H1 (cell line): ENCODE measurements at regions of chr17 and their contacts with region 1.

Region 1: DNA sequence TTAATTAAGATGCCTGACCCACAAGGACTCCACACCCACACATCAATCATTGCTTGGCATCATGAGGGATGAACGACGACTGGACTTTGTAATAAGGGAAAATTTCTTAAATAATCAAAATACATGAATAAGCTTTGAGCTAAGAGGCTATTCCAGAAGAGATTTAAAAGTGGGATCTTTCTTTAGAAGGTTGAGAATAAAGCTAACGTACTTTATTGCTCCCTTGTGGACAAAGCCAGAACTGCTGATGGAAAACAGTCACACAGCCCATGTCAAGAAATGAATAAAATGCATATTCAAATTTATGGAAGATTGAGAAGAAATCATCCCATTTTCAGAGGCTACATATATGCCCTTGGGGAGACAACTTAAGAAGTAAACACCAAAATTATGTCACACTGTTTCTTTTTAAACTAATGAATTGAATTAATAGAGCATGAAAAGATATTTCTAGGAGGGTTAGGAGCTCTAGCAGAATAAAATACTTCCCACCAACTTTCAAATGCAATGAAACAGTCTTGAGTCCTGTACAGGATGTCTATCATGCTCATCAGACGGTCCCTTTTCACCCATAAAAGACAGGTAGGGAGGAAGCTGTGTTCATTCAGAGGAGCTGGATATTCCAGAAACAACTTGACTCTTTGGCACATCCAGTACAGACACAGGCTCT is 60.2 kb upstream of the PHOSPHO1 start:
- DNase-seq: no peak
- H3K4me3 ChIP-seq: no peak overlapping the region
- H3K27ac ChIP-seq: no peak overlapping the region
- H3K4me1 ChIP-seq: no peaks in the 10 kb centered on the region
- H3K27me3 ChIP-seq: no peaks in the 10 kb centered on the region
- CTCF ChIP-seq: peak in 2 of 3 experiments; percentile 46 to 62; a peak in 2 of 4 replicates
- EP300 ChIP-seq: no peak
- POLR2A ChIP-seq: no peak
- RAD21 ChIP-seq: peak; percentile 62 to 66

Region 2: GRCh38 chr17:49223517-49224197 is 67.2 kb before region 1 on chr17:
- CTCF ChIA-PET with region 1: interaction called, 38 read pairs
- POLR2A ChIA-PET with region 1: no interaction called
- DNase-seq: peak in 1 of 2 experiments; percentile 97
- H3K4me3 ChIP-seq: peak overlapping the region; percentile 34 to 63 (median 55)
- H3K27ac ChIP-seq: no peak overlapping the region
- H3K4me1 ChIP-seq: peaks cover 0 to 8% (median 6%) of the 10 kb centered on the region in 4 experiments; a peak in 4 of 7 replicates
- H3K27me3 ChIP-seq: peaks cover 19 to 54% (median 43%) of the 10 kb centered on the region in 4 experiments
- CTCF ChIP-seq: peak; percentile 78 to 92 (median 88)
- EP300 ChIP-seq: no peak
- POLR2A ChIP-seq: no peak
- RAD21 ChIP-seq: peak; percentile 50 to 65

Region 3: DNA sequence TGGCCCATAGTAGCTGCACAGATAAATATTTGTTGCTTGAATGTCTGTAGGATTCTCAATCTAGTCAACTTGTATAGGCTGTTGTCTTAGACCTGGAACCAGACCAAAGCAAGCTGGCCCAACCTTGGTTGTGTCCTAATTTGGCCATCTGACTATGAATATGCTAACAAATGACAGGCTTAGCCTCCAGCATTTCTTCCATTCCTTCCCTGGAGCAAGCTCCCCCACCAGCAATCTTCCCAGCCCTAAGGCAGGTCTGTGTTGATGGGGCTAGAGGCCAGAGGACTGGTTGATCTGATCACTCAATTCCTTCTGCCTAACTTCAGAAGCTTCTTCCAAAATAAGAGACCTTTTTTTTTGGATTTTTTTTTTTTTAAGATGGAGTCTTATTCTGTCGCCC is 50.9 kb before region 1 on chr17:
- CTCF ChIA-PET with region 1: interaction called, 12 read pairs
- POLR2A ChIA-PET with region 1: interaction called, 4 read pairs
- DNase-seq: no peak
- H3K4me3 ChIP-seq: no peak overlapping the region
- H3K27ac ChIP-seq: no peak overlapping the region
- H3K4me1 ChIP-seq: peaks cover 2 to 5% (median 4%) of the 10 kb centered on the region in 4 experiments; a peak in 5 of 7 replicates
- H3K27me3 ChIP-seq: no peaks in the 10 kb centered on the region
- CTCF ChIP-seq: no peak
- EP300 ChIP-seq: no peak
- POLR2A ChIP-seq: no peak
- RAD21 ChIP-seq: no peak

Region 4: DNA sequence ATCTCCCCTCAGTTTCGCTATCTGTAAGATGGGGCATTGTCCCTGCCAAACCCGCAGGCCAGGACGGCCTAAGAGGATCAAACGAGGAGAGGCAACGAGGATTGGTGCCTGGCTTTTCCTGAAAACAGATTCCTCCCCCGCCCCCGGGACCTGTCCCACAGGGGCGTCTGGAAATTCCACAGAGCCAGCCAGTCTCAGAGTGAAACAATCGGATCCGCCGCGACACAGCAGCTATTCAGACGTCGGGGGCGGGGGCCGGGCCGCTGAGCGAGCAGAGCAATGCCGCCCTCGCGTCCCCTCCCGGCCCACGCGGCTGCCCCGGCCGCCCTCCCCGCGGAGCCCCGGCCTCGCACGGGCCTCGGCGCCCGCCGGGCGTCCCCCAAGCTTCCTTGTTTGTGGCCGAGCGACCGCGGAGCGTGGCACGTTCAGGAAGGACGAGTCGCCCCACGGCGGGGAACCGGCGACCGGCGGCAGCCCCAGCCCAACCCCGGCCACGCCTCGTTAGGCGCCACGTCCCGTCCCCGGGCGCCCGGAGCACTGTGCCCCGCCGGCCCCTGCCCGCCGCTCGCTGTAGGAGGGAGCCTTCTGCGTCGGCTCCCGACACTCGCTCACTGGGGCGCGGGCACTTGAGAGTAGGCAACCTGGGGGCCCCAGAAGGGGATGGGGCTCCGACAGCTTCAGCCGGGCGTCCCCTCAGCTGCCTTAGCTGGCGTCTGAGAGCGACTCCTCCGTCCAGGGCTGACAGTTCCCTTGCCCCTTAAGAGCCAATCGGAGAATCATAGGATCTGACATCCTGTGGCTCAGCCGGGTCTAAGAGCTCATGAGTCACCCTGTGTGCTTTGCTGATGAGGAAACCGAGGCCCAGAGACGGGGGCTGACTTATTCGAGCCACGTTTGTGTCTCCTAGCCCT is 30.6 kb before region 1 on chr17:
- CTCF ChIA-PET with region 1: interaction called, 13 read pairs
- POLR2A ChIA-PET with region 1: interaction called, 3 read pairs
- DNase-seq: peak in 1 of 2 experiments; percentile 70
- H3K4me3 ChIP-seq: peak overlapping the region; percentile 46 to 67 (median 60)
- H3K27ac ChIP-seq: no peak overlapping the region
- H3K4me1 ChIP-seq: peaks cover 0 to 3% (median 1%) of the 10 kb centered on the region in 4 experiments; a peak in 1 of 7 replicates
- H3K27me3 ChIP-seq: peaks cover 2 to 16% (median 13%) of the 10 kb centered on the region in 4 experiments; a peak in 6 of 7 replicates
- CTCF ChIP-seq: no peak
- EP300 ChIP-seq: no peak
- POLR2A ChIP-seq: no peak
- RAD21 ChIP-seq: no peak

Region 5: DNA sequence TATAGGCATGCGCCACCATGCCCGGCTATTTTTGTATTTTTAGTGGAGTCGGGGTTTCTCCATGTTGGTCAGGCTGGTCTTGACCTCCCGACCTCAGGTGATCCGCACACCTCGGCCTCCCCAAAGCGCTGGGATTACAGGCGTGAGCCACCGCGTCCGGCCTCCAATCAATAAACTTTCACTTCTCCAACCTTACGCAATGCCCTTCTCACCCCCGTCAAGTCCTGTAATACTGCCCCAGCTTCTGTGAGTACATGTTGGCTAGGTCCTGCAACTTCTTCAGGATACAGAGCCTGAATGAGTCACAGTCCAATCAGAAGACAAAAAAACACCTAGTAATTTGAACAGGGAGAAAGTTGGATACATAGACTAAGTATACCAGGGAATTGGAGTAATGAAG is 13.2 kb before region 1 on chr17:
- CTCF ChIA-PET with region 1: interaction called, 59 read pairs
- POLR2A ChIA-PET with region 1: no interaction called
- DNase-seq: no peak
- H3K4me3 ChIP-seq: no peak overlapping the region
- H3K27ac ChIP-seq: no peak overlapping the region
- H3K4me1 ChIP-seq: peaks cover 0 to 3% (median 2%) of the 10 kb centered on the region in 4 experiments; a peak in 4 of 7 replicates
- H3K27me3 ChIP-seq: no peaks in the 10 kb centered on the region
- CTCF ChIP-seq: no peak
- EP300 ChIP-seq: no peak
- POLR2A ChIP-seq: no peak
- RAD21 ChIP-seq: no peak

Region 6: GRCh38 chr17:49508061-49508865 is 217.4 kb after region 1 on chr17:
- CTCF ChIA-PET with region 1: no interaction called
- POLR2A ChIA-PET with region 1: no interaction called
- DNase-seq: peak; percentile 83 to 97
- H3K4me3 ChIP-seq: peak overlapping the region; percentile 22 to 51 (median 34); a peak in 5 of 8 replicates
- H3K27ac ChIP-seq: peak overlapping the region; percentile 58; the same call in 1 of the 2 replicates
- H3K4me1 ChIP-seq: peaks cover 6 to 40% (median 22%) of the 10 kb centered on the region in 4 experiments
- H3K27me3 ChIP-seq: peaks cover 0 to 2% (median 0%) of the 10 kb centered on the region in 4 experiments; a peak in 1 of 7 replicates
- CTCF ChIP-seq: no peak
- EP300 ChIP-seq: no peak
- POLR2A ChIP-seq: peak in 1 of 2 experiments; percentile 48; a peak in 1 of 3 replicates
- RAD21 ChIP-seq: no peak